ENCODE measurements at regions of chr11 and their contacts with region 1.

Region 1: DNA sequence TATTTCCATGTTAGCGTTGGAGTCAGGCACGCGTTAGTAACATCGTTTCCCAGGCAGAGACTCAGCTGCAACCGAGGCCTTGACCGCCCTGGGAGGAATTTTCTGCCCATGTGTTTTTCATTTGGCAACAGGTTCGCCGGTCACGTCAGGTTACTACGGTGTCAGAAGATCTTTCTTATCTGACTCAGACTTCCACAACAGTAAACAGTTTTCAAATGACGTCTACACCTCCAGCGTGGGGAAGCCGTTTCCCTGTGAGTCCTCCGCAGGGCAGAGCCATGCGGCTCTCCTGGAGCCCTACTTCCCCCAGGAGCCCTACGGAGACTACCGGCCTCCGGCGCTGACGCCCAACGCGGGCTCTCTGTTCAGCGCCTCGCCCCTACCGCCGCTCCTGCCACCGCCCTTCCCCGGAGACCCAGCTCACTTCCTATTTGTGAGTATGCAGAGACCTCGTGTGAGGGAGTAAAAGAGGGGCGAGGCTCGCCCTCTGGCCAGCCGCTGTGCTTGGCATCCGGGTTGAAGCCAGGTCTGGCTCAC is 14.3 kb upstream of the POU2AF3 start:
- DNase-seq: no peak
- ATAC-seq: no peak
- H3K4me3 ChIP-seq: no peak overlapping the region
- H3K4me3 Mint-ChIP-seq: no peak overlapping the region
- H3K27ac ChIP-seq: no peak overlapping the region
- H3K27ac Mint-ChIP-seq: no peak overlapping the region
- H3K4me1 ChIP-seq: no peaks in the 10 kb centered on the region
- H3K4me1 Mint-ChIP-seq: no peaks in the 10 kb centered on the region
- H3K27me3 ChIP-seq: no peaks in the 10 kb centered on the region
- H3K27me3 Mint-ChIP-seq: no peaks in the 10 kb centered on the region
- CTCF ChIP-seq: no peak

Region 2: DNA sequence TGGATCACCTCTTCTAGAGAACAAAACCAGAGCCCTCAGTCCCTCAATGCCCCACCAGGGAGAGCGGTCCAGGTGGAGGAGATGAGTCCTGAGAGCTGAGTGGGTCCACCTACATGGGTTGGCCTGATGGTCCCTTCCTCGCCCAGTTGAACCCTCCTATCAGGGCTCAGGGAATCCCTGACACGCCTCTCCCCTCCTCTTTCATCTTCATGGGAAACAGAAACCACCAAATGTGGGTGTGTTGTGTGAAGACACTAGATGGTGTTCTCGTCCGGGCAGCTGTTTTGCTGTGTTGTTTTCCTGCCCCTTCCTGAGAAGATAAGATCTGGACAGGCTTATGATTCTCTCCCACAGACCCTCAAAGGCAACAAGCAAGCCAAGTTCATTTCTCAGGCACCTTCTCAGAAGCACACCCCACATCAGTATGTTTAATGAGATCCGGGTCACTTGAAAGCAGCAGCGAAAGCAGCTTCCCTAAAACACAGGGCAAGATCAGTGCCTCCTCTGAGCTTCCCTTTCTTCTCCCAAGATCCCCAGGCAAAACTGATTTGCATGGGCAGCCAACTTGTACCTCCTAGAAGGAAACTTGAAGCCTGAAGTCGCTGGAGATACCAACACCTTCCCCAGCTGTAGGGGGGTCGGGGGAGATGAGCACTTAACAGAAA is 130.4 kb after region 1 on chr11:
- CTCF ChIA-PET with region 1: interaction called, 121 read pairs
- POLR2A ChIA-PET with region 1: no interaction called
- intact Hi-C with region 1: no loop called
- DNase-seq: no peak
- ATAC-seq: no peak
- H3K4me3 ChIP-seq: no peak overlapping the region
- H3K4me3 Mint-ChIP-seq: peak overlapping the region; percentile 29
- H3K27ac ChIP-seq: no peak overlapping the region
- H3K27ac Mint-ChIP-seq: no peak overlapping the region
- H3K4me1 ChIP-seq: peaks cover 26% of the 10 kb centered on the region
- H3K4me1 Mint-ChIP-seq: peaks cover 40% of the 10 kb centered on the region
- H3K27me3 ChIP-seq: no peaks in the 10 kb centered on the region
- H3K27me3 Mint-ChIP-seq: no peaks in the 10 kb centered on the region
- CTCF ChIP-seq: no peak

Region 3: DNA sequence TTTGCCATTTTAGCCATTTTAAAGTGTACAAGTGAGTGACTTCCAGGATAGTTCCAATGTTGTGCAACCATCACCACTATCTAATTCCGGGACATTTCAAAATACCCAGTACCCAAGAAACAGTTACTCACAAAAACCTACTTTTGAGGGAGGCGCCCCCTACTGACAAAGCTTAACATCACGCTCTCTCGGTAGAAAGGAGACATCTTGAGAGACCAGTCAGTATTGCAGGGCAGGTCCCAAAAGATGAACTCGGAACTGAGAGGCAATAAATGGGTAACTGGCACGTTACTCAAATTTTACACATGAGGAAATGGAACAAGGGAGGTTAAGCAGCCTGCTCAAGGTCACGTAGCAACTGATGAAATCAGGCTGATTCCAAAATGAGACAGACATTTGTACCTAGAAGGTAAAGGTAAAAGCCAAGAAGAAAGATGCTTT is 145.1 kb after region 1 on chr11:
- CTCF ChIA-PET with region 1: interaction called, 121 read pairs
- POLR2A ChIA-PET with region 1: no interaction called
- intact Hi-C with region 1: no loop called
- DNase-seq: peak in 5 of 9 experiments; percentile 29 to 56 (median 43)
- ATAC-seq: peak; percentile 42
- H3K4me3 ChIP-seq: no peak overlapping the region
- H3K4me3 Mint-ChIP-seq: no peak overlapping the region
- H3K27ac ChIP-seq: no peak overlapping the region
- H3K27ac Mint-ChIP-seq: no peak overlapping the region
- H3K4me1 ChIP-seq: no peaks in the 10 kb centered on the region
- H3K4me1 Mint-ChIP-seq: no peaks in the 10 kb centered on the region
- H3K27me3 ChIP-seq: no peaks in the 10 kb centered on the region
- H3K27me3 Mint-ChIP-seq: peaks cover 1% of the 10 kb centered on the region
- CTCF ChIP-seq: peak; percentile 40

Region 4: DNA sequence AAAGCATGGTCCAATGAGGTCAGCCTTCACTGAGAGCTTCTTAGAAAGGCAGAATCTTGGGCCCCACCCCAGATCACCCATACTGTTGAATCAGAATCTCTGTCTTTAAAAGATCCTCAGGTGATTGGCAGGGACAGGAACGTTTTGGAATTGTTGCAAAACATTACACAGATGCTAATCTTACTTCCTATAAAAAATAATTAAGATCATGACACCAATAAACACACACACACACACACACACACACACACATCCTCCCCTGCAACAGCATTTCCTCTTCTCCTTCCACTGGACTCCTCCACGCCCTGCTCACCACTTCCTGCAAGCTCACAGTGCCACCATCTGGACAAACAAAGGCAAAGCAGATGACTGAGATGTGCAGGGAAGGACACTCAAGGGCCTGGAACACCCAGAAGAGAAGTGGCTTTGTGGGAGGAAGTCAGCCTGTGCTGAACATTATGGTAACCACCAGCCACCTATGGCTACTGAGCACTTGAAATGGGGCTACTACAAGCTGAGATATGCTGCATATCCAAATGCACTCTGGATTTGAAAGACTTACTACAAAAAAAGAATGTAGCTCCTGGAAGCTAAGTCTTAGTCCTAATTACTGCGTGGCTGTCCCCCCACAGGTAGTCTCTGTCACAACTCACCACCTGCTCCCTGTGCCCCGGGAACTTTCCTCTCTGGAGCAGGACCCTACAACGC is 162.5 kb after region 1 on chr11:
- CTCF ChIA-PET with region 1: interaction called, 89 read pairs
- POLR2A ChIA-PET with region 1: interaction called, 3 read pairs
- intact Hi-C with region 1: loop called (anchors 1 kb)
- DNase-seq: peak; percentile 42 to 93 (median 78)
- ATAC-seq: peak; percentile 99
- H3K4me3 ChIP-seq: no peak overlapping the region
- H3K4me3 Mint-ChIP-seq: no peak overlapping the region
- H3K27ac ChIP-seq: peak overlapping the region in 1 of 2 experiments; percentile 54
- H3K27ac Mint-ChIP-seq: no peak overlapping the region
- H3K4me1 ChIP-seq: peaks cover 13% of the 10 kb centered on the region
- H3K4me1 Mint-ChIP-seq: peaks cover 12% of the 10 kb centered on the region
- H3K27me3 ChIP-seq: no peaks in the 10 kb centered on the region
- H3K27me3 Mint-ChIP-seq: no peaks in the 10 kb centered on the region
- CTCF ChIP-seq: peak; percentile 59

Region 5: DNA sequence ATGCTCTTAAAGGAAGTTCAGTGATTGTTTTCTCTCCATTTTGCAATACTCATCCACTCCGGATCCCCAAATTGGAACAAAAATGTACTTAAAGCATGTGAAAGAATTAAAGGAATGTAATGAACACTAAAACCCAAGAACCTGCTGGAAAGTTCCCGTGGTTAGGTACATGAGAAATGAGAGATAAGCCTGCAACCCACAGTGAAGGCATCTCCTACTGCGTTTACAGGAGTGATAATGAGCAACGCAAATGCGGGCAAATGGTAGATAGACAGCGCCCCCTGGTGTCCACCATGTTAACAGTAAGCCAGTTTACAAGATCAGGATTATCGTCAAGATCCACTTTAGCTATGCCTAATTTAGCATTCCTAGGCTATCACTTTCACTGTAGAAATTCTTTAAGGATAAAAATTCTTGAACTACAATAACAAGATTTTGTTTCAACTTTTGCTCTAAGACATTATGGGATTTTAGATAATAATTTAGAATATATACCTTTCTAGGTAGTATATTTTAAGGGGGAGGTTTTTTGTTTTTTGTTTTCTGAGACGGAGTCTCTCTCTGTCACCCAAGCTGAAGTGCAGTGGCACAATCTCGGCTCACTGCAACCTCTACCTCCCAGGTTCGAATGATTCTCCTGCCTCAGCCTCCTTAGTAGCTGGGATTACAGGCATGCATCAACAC is 557.5 kb after region 1 on chr11:
- CTCF ChIA-PET with region 1: no interaction called
- POLR2A ChIA-PET with region 1: no interaction called
- intact Hi-C with region 1: loop called in 1 of 2 experiments (anchors 5 kb)
- DNase-seq: peak; percentile 66 to 92 (median 85)
- ATAC-seq: peak; percentile 95
- H3K4me3 ChIP-seq: no peak overlapping the region
- H3K4me3 Mint-ChIP-seq: no peak overlapping the region
- H3K27ac ChIP-seq: no peak overlapping the region
- H3K27ac Mint-ChIP-seq: no peak overlapping the region
- H3K4me1 ChIP-seq: no peaks in the 10 kb centered on the region
- H3K4me1 Mint-ChIP-seq: peaks cover 6% of the 10 kb centered on the region
- H3K27me3 ChIP-seq: no peaks in the 10 kb centered on the region
- H3K27me3 Mint-ChIP-seq: no peaks in the 10 kb centered on the region
- CTCF ChIP-seq: peak; percentile 87

Measured in CD8-positive, alpha-beta T cell (primary cell).